Tibial artery (tissue), 4 donors: ENCODE measurements at regions of chr17 and their contacts with region 1.

Region 1: GRCh38 chr17:27236717-27237315 is 57.1 kb upstream of the WSB1 start:
- DNase-seq: peak; percentile 85 to 86
- H3K4me3 ChIP-seq: no peak overlapping the region
- H3K27ac ChIP-seq: peak overlapping the region in 1 of 2 donors; percentile 3
- H3K4me1 ChIP-seq: peaks cover 0 to 30% (median 15%) of the 10 kb centered on the region in 4 donors
- H3K27me3 ChIP-seq: no peaks in the 10 kb centered on the region
- CTCF ChIP-seq: peak; percentile 89 to 97

Region 2: DNA sequence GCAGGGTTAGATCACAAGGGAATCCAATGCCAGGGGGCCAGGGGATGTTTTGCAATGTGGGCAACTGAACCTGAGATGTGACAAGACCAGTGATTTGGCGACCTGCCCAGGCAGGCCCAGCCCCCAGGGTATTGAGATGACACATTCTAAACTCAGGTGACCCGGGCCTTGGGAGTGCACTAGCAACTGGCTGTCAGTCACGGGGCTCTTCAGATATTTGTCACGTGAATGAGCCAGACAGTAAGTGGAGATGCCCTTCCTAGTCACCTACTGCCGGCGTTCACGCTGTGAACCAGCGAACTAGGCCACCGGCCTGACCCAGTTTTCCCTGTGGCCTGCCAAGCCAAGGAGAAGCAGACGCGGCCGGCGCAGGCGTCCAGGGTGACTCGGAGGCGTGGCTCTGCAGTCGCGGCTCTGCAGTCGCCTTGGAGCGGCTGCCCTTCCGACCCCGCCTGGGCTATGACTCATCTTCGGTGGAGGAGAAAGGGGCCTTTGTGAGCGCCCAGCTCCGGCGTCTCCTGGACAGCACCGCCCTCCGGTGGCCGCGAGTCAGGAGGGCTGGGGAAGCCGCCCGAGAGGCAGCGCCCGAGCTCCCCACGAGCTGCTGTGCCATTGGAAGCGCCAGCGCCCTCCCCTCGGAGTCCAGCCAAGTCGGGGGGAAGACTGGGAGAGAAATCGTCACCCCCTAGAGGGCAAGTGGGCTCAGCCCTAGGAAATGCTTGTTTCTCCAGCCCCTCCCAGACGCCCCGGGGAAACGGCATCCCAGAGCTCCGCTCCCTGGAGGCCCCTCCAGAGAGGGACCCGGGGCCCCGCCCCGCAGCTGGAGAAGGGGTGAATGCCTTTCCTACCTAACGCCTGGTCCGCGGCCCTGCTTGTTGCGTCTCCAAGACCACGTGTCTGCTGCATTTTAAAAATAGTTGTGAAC is 95.9 kb after region 1 on chr17:
- intact Hi-C with region 1: loop called (anchors 2 kb)
- DNase-seq: peak; percentile 98 to 100
- H3K4me3 ChIP-seq: peak overlapping the region; percentile 48 to 62
- H3K27ac ChIP-seq: peak overlapping the region; percentile 86 to 95
- H3K4me1 ChIP-seq: peaks cover 6 to 24% (median 12%) of the 10 kb centered on the region in 4 donors
- H3K27me3 ChIP-seq: no peaks in the 10 kb centered on the region
- CTCF ChIP-seq: peak; percentile 91 to 95

Region 3: DNA sequence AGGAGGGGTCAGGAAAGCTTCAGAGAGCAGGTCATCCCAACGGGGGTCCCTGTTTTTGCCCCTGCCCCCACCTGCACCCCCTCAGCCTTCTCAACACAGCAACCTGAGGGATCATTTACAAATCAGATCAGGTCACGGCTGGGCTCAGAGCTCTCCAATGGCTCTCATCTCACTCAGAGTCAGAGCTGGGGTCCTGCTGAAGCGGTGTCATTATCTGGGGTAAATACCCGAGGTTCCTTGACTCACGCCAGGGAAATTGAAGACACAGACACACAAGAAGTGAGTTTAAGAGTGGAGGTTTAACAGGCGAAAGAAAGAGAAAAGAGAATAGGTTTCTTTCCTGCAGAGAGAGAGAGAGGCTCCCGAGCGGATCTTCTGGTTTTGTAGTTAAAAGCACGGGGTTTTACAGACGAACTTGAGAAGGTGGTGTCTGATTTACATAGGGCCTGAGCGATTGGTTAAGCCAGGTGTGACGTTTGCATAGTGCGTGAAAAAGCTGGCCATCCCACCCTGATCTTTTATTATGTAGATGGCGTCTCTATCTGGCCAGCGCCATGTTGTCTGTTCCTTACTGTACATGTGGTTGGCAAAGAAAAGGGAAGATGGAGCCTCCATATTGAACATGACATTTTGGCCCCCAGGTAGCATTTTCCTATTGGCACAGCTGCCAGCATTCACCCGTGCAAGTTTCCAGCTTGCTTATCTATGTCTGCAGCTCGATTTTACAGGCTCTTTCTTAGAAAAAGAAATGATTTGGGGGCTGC is 108.5 kb after region 1 on chr17:
- intact Hi-C with region 1: loop called (anchors 5 kb)
- DNase-seq: no peak
- H3K4me3 ChIP-seq: no peak overlapping the region
- H3K27ac ChIP-seq: no peak overlapping the region
- H3K4me1 ChIP-seq: peaks cover 0 to 13% (median 5%) of the 10 kb centered on the region in 4 donors
- H3K27me3 ChIP-seq: no peaks in the 10 kb centered on the region
- CTCF ChIP-seq: no peak

Region 4: GRCh38 chr17:27430882-27431491 is 194.2 kb after region 1 on chr17:
- intact Hi-C with region 1: loop called (anchors 10 kb)
- DNase-seq: no peak
- H3K4me3 ChIP-seq: no peak overlapping the region
- H3K27ac ChIP-seq: no peak overlapping the region
- H3K4me1 ChIP-seq: no peaks in the 10 kb centered on the region
- H3K27me3 ChIP-seq: no peaks in the 10 kb centered on the region
- CTCF ChIP-seq: peak; percentile 46 to 52